ENCODE measurements at regions of chr4 and their contacts with region 1.

Region 1: GRCh38 chr4:102826890-102827673 is at the start of gene UBE2D3:
- DNase-seq: peak; percentile 98
- H3K4me3 Mint-ChIP-seq: no peak within 1 kb of the TSS
- H3K27ac Mint-ChIP-seq: no peak within 1 kb of the TSS
- H3K4me1 Mint-ChIP-seq: peaks cover 31% of the 10 kb centered on the region
- H3K27me3 Mint-ChIP-seq: no peaks in the 10 kb centered on the region
- total RNA-seq, gene UBE2D3: 488 TPM in 2 replicates

Region 2: DNA sequence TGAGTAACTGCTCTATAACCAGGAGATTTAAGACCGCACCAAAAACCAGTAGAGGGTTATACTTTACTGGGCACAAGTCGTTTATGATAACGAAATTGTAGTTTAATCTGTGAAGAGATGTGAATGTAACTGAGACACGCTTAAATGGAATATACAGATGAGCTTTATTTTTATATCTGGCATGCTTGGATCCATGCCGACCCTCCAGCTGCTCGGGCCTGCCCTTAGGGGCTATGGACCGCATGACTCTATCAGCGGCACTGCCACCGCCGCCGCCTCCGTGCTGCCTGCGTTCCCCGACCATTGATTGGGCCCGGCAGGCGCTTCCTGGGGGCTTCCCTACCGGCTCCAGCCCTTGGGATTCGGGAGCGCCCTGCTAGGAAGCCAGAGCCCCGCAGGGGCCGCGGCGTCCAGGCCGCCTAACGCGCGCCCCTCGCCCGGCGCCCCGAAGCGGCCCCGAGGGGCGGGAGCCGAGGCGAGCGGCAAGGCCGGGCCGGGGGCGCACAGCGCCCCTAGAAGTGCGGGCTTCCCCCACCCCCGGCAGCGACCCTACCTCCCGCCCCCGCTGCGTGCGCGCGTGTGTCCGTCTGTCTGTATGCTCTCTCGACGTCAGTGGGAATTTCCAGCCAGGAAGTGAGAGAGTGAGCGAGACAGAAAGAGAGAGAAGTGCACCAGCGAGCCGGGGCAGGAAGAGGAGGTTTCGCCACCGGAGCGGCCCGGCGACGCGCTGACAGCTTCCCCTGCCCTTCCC is 326.2 kb before region 1 on chr4 and contains the start of gene NFKB1:
- intact Hi-C with region 1: loop called (anchors 1 kb)
- DNase-seq: peak; percentile 95
- H3K4me3 Mint-ChIP-seq: peak within 1 kb of the TSS; percentile 95
- H3K27ac Mint-ChIP-seq: peak within 1 kb of the TSS; percentile 95
- H3K4me1 Mint-ChIP-seq: peaks cover 22% of the 10 kb centered on the region
- H3K27me3 Mint-ChIP-seq: no peaks in the 10 kb centered on the region
- total RNA-seq, gene NFKB1: 146 and 148 TPM in 2 replicates

Region 3: DNA sequence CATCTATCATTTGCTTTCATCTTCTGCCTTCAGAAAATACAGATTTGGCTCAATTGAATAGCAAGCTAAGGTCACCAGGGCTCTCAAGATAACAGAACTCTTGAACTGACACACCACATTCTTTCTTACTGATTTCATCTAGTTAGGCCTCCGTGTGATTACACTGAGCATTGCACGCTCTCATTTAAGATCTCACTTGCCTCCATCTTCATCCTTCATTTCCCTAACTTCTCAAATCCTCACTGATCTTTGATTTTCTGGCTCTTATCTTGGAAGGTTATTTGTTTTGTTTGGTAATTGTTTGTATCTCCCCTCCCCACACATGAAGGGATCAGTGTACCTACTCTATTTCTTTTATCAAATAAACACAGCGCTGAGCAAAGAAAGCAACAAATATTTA is 114.0 kb before region 1 on chr4:
- intact Hi-C with region 1: no loop called
- DNase-seq: no peak
- H3K4me3 Mint-ChIP-seq: no peak overlapping the region
- H3K27ac Mint-ChIP-seq: no peak overlapping the region
- H3K4me1 Mint-ChIP-seq: peaks cover 1% of the 10 kb centered on the region
- H3K27me3 Mint-ChIP-seq: no peaks in the 10 kb centered on the region

Region 4: GRCh38 chr4:102760645-102761295 is 66.3 kb before region 1 on chr4 and contains the start of gene MANBA:
- intact Hi-C with region 1: loop called (anchors 1 kb)
- DNase-seq: peak; percentile 94
- H3K4me3 Mint-ChIP-seq: peak within 1 kb of the TSS; percentile 88
- H3K27ac Mint-ChIP-seq: peak within 1 kb of the TSS; percentile 87
- H3K4me1 Mint-ChIP-seq: peaks cover 28% of the 10 kb centered on the region
- H3K27me3 Mint-ChIP-seq: peaks cover 13% of the 10 kb centered on the region
- total RNA-seq, gene MANBA: 8.2 and 9.4 TPM in 2 replicates

Region 5: GRCh38 chr4:102799816-102800215 is 27.3 kb before region 1 on chr4:
- intact Hi-C with region 1: no loop called
- DNase-seq: peak; percentile 23
- H3K4me3 Mint-ChIP-seq: no peak overlapping the region
- H3K27ac Mint-ChIP-seq: no peak overlapping the region
- H3K4me1 Mint-ChIP-seq: peaks cover 7% of the 10 kb centered on the region
- H3K27me3 Mint-ChIP-seq: no peaks in the 10 kb centered on the region

Region 6: GRCh38 chr4:103008875-103009729 is 182.0 kb after region 1 on chr4:
- intact Hi-C with region 1: loop called (anchors 2 kb)
- DNase-seq: peak; percentile 83
- H3K4me3 Mint-ChIP-seq: no peak overlapping the region
- H3K27ac Mint-ChIP-seq: no peak overlapping the region
- H3K4me1 Mint-ChIP-seq: no peaks in the 10 kb centered on the region
- H3K27me3 Mint-ChIP-seq: peaks cover 8% of the 10 kb centered on the region

Region 7: DNA sequence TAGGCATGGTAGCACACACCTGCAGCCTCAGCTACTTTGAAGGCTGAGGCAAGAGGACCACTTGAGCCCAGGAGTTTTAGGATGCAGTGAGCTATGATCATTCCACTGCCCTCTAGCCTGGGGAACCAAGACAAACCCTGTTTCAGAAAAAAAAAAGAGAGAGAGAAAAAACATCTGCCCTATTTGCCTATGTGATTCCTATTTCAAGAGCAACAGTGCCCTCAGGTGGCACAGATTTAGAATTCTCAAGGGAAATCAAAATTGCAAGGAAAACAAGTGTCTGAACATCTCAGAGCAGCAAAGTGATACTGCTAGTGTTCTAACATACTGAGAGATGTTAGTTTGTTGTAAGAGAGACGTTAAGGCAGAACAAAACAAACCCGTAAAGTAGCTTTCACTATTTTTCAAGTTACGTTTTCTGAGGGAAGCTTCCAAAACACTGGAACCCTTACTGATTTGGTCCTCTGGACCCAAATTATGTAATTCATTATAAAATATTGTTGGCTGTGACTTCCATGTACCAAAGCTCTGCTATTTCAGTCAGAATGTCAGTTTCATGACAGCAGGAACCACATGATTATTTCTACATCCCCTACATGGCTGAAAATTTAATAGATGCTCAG is 264.6 kb after region 1 on chr4:
- intact Hi-C with region 1: loop called (anchors 1 kb)
- DNase-seq: peak; percentile 87
- H3K4me3 Mint-ChIP-seq: peak overlapping the region; percentile 59
- H3K27ac Mint-ChIP-seq: peak overlapping the region; percentile 51
- H3K4me1 Mint-ChIP-seq: peaks cover 20% of the 10 kb centered on the region
- H3K27me3 Mint-ChIP-seq: no peaks in the 10 kb centered on the region